Aorta (tissue), 5 donors: ENCODE measurements at regions of chr14 and their contacts with region 1.

Region 1: DNA sequence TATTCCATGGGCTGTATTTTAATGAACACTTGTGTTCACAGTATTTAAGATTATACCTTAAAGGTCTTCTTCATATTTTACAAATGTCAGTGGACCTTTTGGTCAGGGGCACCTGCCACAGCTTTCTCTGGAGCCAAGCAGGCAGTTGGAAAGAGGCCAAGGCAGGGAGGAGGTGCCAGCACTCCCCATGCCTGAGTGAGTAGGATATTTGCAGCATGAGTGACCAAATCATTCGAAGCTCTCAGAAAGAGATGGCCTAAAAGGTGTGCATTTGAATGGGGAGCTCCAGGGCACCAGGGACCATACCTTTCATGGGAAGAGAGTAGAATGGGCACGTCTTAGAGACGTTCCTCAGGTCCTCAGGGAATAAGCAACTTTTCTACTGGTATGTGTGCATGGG is 121.6 kb downstream of the GPR135 start:
- DNase-seq: peak in 1 of 2 donors; percentile 80
- ATAC-seq: no peak
- H3K4me3 ChIP-seq: no peak overlapping the region
- H3K27ac ChIP-seq: no peak overlapping the region
- H3K4me1 ChIP-seq: peaks cover 4 to 20% of the 10 kb centered on the region in 2 donors
- H3K27me3 ChIP-seq: no peaks in the 10 kb centered on the region

Region 2: DNA sequence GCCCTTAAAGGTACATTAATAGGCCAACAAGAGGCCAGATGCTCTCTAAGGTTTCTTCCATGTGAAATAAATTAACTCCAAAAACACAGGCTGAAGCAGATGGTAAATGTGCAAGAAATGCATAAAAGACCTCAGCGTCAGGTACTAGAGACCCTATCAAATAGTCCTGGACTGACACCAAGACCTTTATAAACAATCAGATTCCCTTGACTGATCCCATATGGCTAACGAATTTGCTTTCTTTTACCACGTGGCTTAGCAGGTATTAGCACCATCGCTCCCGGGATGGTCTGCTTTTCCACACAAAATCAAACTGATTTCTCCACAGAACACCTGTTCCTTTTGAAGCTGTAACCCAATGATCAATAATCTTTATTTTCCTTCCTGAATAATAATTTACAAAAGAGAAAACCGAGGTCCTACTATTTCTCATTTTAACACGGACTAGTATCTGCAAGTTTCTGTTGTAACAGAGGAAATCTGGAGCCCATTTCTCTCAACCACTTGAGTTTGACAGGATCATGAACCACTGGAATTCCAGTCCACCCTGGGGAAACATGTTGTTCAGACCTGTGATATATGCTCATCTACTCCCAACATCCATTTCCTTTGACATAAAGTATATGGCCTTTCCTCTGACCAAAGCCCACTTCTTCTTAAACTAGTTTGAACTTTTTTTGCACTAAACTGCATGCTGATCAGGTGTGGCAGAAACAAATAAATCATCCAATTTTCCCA is 203.3 kb before region 1 on chr14:
- intact Hi-C with region 1: no loop called
- DNase-seq: no peak
- ATAC-seq: no peak
- H3K4me3 ChIP-seq: no peak overlapping the region
- H3K27ac ChIP-seq: no peak overlapping the region
- H3K4me1 ChIP-seq: peaks cover 0 to 1% of the 10 kb centered on the region in 2 donors
- H3K27me3 ChIP-seq: no peaks in the 10 kb centered on the region

Region 3: GRCh38 chr14:59254146-59254941 is 89.2 kb before region 1 on chr14:
- intact Hi-C with region 1: no loop called
- DNase-seq: peak in 1 of 2 donors; percentile 79
- ATAC-seq: peak; percentile 85
- H3K4me3 ChIP-seq: no peak overlapping the region
- H3K27ac ChIP-seq: peak overlapping the region; percentile 68 to 97
- H3K4me1 ChIP-seq: peaks cover 20 to 26% of the 10 kb centered on the region in 2 donors
- H3K27me3 ChIP-seq: no peaks in the 10 kb centered on the region

Region 4: GRCh38 chr14:59275653-59276052 is 67.9 kb before region 1 on chr14:
- intact Hi-C with region 1: loop called (anchors 10 kb)
- DNase-seq: no peak
- ATAC-seq: peak; percentile 70
- H3K4me3 ChIP-seq: no peak overlapping the region
- H3K27ac ChIP-seq: peak overlapping the region in 1 of 2 donors; percentile 76
- H3K4me1 ChIP-seq: peaks cover 4 to 9% of the 10 kb centered on the region in 2 donors
- H3K27me3 ChIP-seq: no peaks in the 10 kb centered on the region

Region 5: GRCh38 chr14:59422069-59422881 is 78.7 kb after region 1 on chr14:
- intact Hi-C with region 1: loop called (anchors 5 kb)
- DNase-seq: no peak
- ATAC-seq: peak; percentile 34
- H3K4me3 ChIP-seq: no peak overlapping the region
- H3K27ac ChIP-seq: peak overlapping the region in 1 of 2 donors; percentile 65
- H3K4me1 ChIP-seq: peaks cover 3 to 14% of the 10 kb centered on the region in 2 donors
- H3K27me3 ChIP-seq: no peaks in the 10 kb centered on the region

Region 6: GRCh38 chr14:59428581-59429012 is 85.0 kb after region 1 on chr14:
- intact Hi-C with region 1: loop called (anchors 5 kb)
- DNase-seq: no peak
- ATAC-seq: peak; percentile 33
- H3K4me3 ChIP-seq: no peak overlapping the region
- H3K27ac ChIP-seq: peak overlapping the region; percentile 11 to 62
- H3K4me1 ChIP-seq: peaks cover 3 to 7% of the 10 kb centered on the region in 2 donors
- H3K27me3 ChIP-seq: no peaks in the 10 kb centered on the region